ENCODE measurements at regions of chr2 and their contacts with region 1.

Region 1: GRCh38 chr2:235642446-235643098 is 148.7 kb downstream of the AGAP1 start:
- DNase-seq: no peak
- H3K4me3 ChIP-seq: no peak overlapping the region
- CTCF ChIP-seq: peak; percentile 21

Region 2: GRCh38 chr2:235149240-235149659 is 493.3 kb before region 1 on chr2:
- in situ Hi-C with region 1: loop called (anchors 10 kb)
- DNase-seq: peak; percentile 74
- H3K4me3 ChIP-seq: no peak overlapping the region
- CTCF ChIP-seq: no peak

Region 3: DNA sequence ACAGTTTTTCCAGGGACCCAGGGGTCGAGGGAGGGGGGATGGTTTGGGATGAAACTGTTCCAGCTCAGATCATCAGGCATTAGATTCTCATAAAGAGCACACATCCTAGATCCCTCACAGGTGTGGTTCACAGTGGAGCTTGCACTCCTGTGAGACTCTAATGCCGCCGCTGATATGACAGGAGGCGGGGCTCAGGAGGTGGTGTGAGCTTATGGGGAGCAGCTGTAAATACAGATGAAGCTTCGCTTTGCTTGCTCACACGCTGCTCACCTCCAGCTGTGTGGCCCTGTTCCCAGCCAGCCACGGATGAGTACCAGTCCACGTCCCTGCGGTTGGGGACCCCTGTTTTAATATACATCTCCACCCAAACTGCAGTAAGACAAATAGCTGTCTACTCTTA is 55.5 kb after region 1 on chr2:
- in situ Hi-C with region 1: no loop called
- DNase-seq: no peak
- H3K4me3 ChIP-seq: no peak overlapping the region
- CTCF ChIP-seq: no peak

Region 4: DNA sequence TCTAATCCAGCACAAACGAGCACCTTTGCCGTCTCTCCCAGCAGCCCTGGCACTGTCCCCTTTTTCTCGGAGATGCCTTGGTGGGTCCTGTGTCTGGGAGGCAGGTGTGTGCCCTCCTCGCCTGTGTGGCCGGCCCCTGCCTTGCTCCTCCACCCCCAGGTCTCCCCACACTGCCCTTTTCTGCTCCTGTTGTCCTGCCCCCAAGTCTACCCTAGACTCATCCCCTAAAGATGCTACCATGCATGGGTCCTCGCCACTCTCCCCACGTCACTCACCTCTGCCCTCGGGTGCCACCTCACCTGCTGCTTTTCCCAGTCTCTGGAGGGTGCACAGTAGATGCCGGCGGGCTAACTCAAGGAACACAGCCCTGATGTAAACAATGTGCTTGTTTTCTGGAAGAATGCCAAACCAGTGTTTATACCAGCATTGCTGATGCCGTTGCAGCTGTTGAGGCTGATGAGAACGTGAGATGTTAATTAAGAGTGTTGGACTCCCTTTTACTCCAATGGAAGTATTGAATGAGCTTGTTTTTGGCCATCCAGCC is 74.4 kb after region 1 on chr2:
- in situ Hi-C with region 1: no loop called
- DNase-seq: no peak
- H3K4me3 ChIP-seq: no peak overlapping the region
- CTCF ChIP-seq: no peak

Measured in astrocyte of the cerebellum (primary cell).